GM12878 (cell line): ENCODE measurements at regions of chr2 and their contacts with region 1.

Region 1: GRCh38 chr2:51290725-51291124 is 258.8 kb upstream of the NRXN1 start:
- DNase-seq: no peak
- ATAC-seq: no peak
- H3K4me3 ChIP-seq: no peak overlapping the region
- H3K27ac ChIP-seq: no peak overlapping the region
- H3K4me1 ChIP-seq: no peaks in the 10 kb centered on the region
- H3K27me3 ChIP-seq: no peaks in the 10 kb centered on the region
- CTCF ChIP-seq: no peak
- EP300 ChIP-seq: no peak
- POLR2A ChIP-seq: no peak
- RAD21 ChIP-seq: no peak

Region 2: GRCh38 chr2:51103205-51103604 is 187.5 kb before region 1 on chr2:
- CTCF ChIA-PET with region 1: no interaction called
- POLR2A ChIA-PET with region 1: no interaction called
- RAD21 ChIA-PET with region 1: no interaction called
- SMC1A ChIA-PET with region 1: no interaction called
- in situ Hi-C with region 1: no loop called
- intact Hi-C with region 1: no loop called
- DNase-seq: no peak
- ATAC-seq: no peak
- H3K4me3 ChIP-seq: no peak overlapping the region
- H3K27ac ChIP-seq: no peak overlapping the region
- H3K4me1 ChIP-seq: no peaks in the 10 kb centered on the region
- H3K27me3 ChIP-seq: no peaks in the 10 kb centered on the region
- CTCF ChIP-seq: no peak
- EP300 ChIP-seq: no peak
- POLR2A ChIP-seq: no peak
- RAD21 ChIP-seq: no peak

Region 3: DNA sequence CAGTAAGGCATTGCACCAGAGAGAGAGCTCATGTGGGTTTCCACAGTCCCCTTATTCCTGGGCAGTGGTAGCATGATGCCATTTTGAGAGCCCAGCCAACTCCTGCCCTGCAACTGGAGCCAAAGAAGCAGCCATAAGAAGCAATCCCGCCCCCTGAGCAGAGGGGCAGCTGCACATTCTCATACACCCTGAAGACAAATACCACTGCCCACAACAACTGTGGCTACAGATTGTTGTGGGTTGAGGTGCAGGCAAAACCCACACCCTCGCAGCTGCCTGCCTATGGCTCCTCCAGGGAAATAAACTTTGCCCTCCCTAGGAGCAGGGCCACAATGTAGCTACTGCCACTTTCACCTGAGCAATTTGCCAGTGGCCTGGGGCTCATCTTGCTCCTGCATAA is 39.4 kb before region 1 on chr2:
- CTCF ChIA-PET with region 1: no interaction called
- POLR2A ChIA-PET with region 1: no interaction called
- RAD21 ChIA-PET with region 1: no interaction called
- SMC1A ChIA-PET with region 1: no interaction called
- in situ Hi-C with region 1: no loop called
- intact Hi-C with region 1: loop called (anchors 5 kb)
- DNase-seq: no peak
- ATAC-seq: no peak
- H3K4me3 ChIP-seq: no peak overlapping the region
- H3K27ac ChIP-seq: no peak overlapping the region
- H3K4me1 ChIP-seq: no peaks in the 10 kb centered on the region
- H3K27me3 ChIP-seq: no peaks in the 10 kb centered on the region
- CTCF ChIP-seq: no peak
- EP300 ChIP-seq: no peak
- POLR2A ChIP-seq: no peak
- RAD21 ChIP-seq: no peak

Region 4: DNA sequence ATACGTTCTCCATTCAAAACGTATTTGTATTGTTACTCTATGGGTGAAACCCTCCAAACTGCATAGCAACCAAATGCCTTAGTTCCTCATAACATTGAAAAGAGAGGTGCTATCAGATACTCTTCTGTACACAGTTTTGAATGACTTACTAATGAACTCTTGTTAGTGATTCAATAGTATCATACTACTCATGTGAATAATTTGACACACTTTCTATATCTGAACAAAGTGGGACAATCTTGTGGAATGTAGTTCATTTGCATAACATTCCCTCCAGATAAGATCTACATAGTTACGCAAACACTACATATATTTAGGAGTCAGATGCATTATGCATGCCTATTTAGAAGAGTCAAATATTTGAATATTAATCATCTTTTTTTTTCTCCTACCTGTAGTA is 26.8 kb before region 1 on chr2:
- CTCF ChIA-PET with region 1: no interaction called
- POLR2A ChIA-PET with region 1: no interaction called
- RAD21 ChIA-PET with region 1: no interaction called
- SMC1A ChIA-PET with region 1: interaction called, 13 read pairs
- in situ Hi-C with region 1: no loop called
- intact Hi-C with region 1: no loop called
- DNase-seq: no peak
- ATAC-seq: no peak
- H3K4me3 ChIP-seq: no peak overlapping the region
- H3K27ac ChIP-seq: no peak overlapping the region
- H3K4me1 ChIP-seq: no peaks in the 10 kb centered on the region
- H3K27me3 ChIP-seq: no peaks in the 10 kb centered on the region
- CTCF ChIP-seq: no peak
- EP300 ChIP-seq: no peak
- POLR2A ChIP-seq: no peak
- RAD21 ChIP-seq: no peak